ENCODE measurements at regions of chr5 and their contacts with region 1.

Region 1: GRCh38 chr5:14727428-14727865 is 62.9 kb downstream of the OTULIN start:
- DNase-seq: peak; percentile 78
- ATAC-seq: peak; percentile 80 to 81
- H3K4me3 ChIP-seq: no peak overlapping the region
- H3K27ac ChIP-seq: no peak overlapping the region
- H3K4me1 ChIP-seq: peaks cover 10% of the 10 kb centered on the region
- H3K27me3 ChIP-seq: no peaks in the 10 kb centered on the region
- CTCF ChIP-seq: peak; percentile 94

Region 2: DNA sequence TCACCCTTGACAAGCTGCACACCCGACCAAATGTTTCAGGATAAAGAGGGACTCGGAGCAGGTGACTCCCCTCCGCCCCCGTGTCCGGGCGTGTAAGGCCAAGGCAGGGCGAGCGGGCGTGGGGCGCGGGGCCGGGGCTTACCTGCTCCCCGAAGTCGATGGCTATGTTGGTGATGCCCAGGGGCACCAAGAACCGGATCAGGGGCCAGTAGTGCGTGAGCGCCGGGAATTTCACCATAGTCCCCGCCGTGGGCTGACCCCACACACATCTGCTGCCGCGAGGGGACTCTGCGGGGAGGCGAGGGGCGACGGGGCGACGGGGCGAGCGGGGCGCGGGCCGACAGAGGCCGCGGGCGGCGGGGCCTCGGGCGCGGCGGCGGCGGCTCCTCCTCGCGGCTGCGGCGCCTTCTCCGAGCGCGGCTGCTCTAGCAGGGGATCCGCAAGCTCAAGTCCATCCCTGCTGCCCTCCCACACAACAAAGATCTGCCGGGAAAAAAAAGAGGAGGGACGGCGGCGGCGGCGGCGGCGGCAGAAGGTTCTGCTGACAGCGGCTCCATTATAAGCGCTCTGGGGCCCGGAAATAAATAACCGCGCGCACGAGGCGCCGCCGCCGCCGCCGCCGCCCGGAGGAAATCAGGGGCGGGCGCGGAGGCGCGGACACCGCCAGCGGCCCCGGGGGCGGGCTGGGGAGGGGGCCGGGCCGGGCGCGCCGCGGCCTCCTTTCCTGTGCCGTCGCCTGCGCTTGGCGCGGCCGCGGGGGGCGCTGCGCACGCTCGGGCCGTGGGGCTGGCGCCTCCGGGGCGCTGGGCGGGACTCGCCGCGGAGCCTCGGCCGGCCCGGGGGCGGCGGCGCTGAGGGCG is 144.0 kb after region 1 on chr5 and contains the start of gene ANKH:
- intact Hi-C with region 1: loop called (anchors 10 kb)
- DNase-seq: peak; percentile 85
- ATAC-seq: peak; percentile 94 to 97
- H3K4me3 ChIP-seq: peak within 1 kb of the TSS; percentile 79
- H3K27ac ChIP-seq: peak within 1 kb of the TSS; percentile 92
- H3K4me1 ChIP-seq: peaks cover 19% of the 10 kb centered on the region
- H3K27me3 ChIP-seq: no peaks in the 10 kb centered on the region
- CTCF ChIP-seq: no peak
- total RNA-seq, gene ANKH: 53.7 TPM

Region 3: DNA sequence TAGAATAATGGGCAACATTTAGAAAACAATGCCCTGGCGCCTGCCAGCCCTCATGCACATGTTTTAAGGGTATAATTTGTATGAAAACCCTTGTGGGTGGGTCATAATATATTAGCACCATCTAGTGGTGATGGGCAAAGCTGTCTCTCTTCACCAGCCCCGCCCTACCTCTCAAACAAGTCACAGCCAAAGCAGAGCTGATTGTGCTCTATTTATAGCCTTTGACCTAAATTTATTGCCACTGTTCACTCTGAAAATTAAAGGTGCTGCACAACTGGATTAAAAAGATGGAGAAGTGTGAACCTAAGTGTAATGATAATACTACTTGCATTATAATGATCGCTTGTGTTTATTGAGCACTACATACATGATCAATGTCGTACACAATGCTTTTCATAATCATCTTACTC is 276.1 kb after region 1 on chr5:
- intact Hi-C with region 1: loop called (anchors 10 kb)
- DNase-seq: no peak
- ATAC-seq: peak; percentile 83 to 89
- H3K4me3 ChIP-seq: no peak overlapping the region
- H3K27ac ChIP-seq: no peak overlapping the region
- H3K4me1 ChIP-seq: peaks cover 10% of the 10 kb centered on the region
- H3K27me3 ChIP-seq: no peaks in the 10 kb centered on the region
- CTCF ChIP-seq: peak; percentile 82